Heart right ventricle (tissue), 16 donors: ENCODE measurements at regions of chr18 and their contacts with region 1.

Region 1: GRCh38 chr18:54119524-54120019 is 104.9 kb downstream of the MBD2 start:
- DNase-seq: peak in 1 of 2 donors; percentile 5
- ATAC-seq: peak in 7 of 8 donors; percentile 34 to 80 (median 64)
- H3K4me3 ChIP-seq: peak overlapping the region in 3 of 10 donors; percentile 6 to 12 (median 10)
- H3K27ac ChIP-seq: no peak overlapping the region
- H3K4me1 ChIP-seq: peaks cover 0 to 4% (median 0%) of the 10 kb centered on the region in 9 donors
- H3K27me3 ChIP-seq: peaks cover 0 to 7% (median 0%) of the 10 kb centered on the region in 7 donors
- CTCF ChIP-seq: peak; percentile 30 to 84 (median 82)

Region 2: DNA sequence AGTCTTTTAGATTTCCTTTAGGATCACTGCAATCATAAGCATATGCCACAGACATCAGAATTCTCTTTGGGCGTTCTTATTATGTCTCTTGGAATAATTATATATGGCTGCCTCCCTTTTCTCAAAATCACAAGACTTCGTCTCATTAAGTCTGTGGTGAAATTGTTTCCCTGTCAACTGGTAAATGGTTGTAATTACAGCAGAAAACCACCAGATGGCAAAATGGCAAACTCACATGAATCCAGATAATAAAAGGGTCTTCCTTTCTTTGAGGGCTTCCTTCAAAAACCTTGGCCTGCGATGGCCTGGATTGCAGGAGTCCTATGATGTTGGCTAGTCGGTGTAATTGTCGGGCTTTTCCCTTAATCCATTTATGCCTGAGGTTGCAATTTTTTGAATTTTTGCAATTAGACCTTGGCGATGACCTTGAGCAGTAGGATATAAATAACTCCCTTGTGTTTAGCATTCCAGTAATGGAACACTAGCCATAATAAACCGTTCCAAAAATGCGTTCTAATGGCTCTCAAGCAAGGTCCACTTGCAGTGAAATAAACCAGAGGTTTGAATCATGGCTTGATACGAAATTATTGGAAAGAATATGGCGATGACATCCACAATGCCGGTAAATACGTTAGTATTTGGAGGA is 551.5 kb before region 1 on chr18:
- intact Hi-C with region 1: loop called in 9 of 10 experiments (anchors 2 to 10 kb)
- DNase-seq: no peak
- ATAC-seq: peak; percentile 25 to 82 (median 64)
- H3K4me3 ChIP-seq: no peak overlapping the region
- H3K27ac ChIP-seq: peak overlapping the region in 1 of 10 donors; percentile 45
- H3K4me1 ChIP-seq: peaks cover 0 to 9% (median 0%) of the 10 kb centered on the region in 9 donors
- H3K27me3 ChIP-seq: no peaks in the 10 kb centered on the region
- CTCF ChIP-seq: peak in 7 of 9 donors; percentile 57 to 72 (median 61)

Region 3: GRCh38 chr18:53698907-53699306 is 420.7 kb before region 1 on chr18:
- intact Hi-C with region 1: loop called in 9 of 10 experiments (anchors 2 to 10 kb)
- DNase-seq: peak in 1 of 2 donors; percentile 18
- ATAC-seq: peak in 4 of 8 donors; percentile 42 to 82 (median 68)
- H3K4me3 ChIP-seq: no peak overlapping the region
- H3K27ac ChIP-seq: no peak overlapping the region
- H3K4me1 ChIP-seq: no peaks in the 10 kb centered on the region
- H3K27me3 ChIP-seq: no peaks in the 10 kb centered on the region
- CTCF ChIP-seq: peak; percentile 24 to 63 (median 48)

Region 4: DNA sequence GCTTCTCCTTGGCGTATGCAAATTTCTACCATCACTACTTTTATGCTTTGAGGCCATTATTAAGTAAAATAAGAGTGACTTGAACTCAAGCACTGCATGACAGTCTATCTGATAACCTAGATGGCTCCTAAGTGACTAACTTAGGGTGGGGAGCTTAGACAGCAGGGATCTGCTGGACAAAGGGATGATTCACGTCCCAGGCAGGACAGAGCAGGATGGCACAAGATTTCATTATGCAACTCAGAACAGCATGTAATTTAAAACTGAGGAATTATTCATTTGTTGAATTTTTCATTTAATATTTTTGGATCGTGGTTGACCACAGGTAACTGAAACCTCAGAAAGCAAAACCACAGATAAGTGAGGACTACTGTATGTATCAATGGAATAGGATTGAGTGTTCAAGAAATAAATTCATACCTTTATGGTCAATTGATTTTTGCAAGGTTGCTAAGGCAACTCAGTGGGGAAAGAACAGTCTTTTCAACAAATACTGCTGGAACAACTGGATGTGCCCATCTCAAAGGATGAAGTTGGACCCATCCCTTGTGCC is 10.4 kb before region 1 on chr18:
- intact Hi-C with region 1: loop called in 1 of 10 experiments (anchors 1 kb)
- DNase-seq: no peak
- ATAC-seq: no peak
- H3K4me3 ChIP-seq: no peak overlapping the region
- H3K27ac ChIP-seq: no peak overlapping the region
- H3K4me1 ChIP-seq: no peaks in the 10 kb centered on the region
- H3K27me3 ChIP-seq: no peaks in the 10 kb centered on the region
- CTCF ChIP-seq: no peak

Region 5: DNA sequence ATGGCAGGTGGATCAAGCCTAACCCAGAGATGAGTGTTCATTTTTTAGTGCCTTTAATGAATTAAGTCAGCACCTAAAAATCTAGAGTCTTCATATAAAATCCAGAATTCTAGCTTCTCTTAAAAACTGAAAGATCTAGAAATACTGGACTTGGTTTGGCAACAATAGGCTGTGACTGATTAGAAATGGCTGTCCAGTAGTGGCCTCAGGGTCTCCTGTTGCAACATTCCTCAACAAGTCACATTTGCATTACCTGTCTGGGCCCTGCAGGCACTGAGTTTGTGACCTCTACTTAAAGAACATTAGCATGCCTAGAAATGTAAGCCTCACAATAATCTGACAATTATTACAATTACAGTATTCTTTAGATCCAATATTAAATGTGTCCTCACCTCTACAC is 71.8 kb after region 1 on chr18:
- intact Hi-C with region 1: no loop called
- DNase-seq: no peak
- ATAC-seq: no peak
- H3K4me3 ChIP-seq: no peak overlapping the region
- H3K27ac ChIP-seq: no peak overlapping the region
- H3K4me1 ChIP-seq: peaks cover 0 to 4% (median 0%) of the 10 kb centered on the region in 9 donors
- H3K27me3 ChIP-seq: no peaks in the 10 kb centered on the region
- CTCF ChIP-seq: no peak